PC-9 (cell line): ENCODE measurements at regions of chr20 and their contacts with region 1.

Region 1: DNA sequence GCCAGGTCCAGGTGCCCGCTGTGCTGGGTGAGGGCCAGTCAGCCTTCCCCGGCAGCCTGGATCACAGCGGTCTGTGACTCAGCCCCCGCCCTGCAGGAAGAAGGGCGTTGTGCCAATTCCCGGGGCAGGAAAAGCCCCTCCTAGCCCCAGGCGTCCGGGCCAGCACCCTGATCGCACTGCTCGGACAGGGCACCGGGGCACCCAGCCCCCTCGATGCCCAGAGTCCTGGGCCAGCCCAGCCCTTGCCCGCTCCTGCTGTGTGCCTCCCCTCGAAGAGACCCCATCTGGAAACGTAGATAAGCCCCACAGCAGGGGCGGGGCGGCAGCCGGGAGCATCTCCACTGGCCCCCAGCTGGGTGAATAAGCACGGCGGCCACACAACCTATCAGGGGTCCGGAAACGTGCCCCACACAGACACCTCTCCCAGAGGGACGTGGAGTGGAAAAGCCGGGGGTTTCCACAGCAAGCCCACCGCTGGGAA is 9.9 kb downstream of the LAMA5 start:
- DNase-seq: peak; percentile 74 to 96
- H3K4me3 ChIP-seq: peak overlapping the region; percentile 55
- H3K27ac ChIP-seq: peak overlapping the region; percentile 86
- H3K4me1 ChIP-seq: peaks cover 92% of the 10 kb centered on the region
- H3K27me3 ChIP-seq: no peaks in the 10 kb centered on the region
- CTCF ChIP-seq: no peak

Region 2: DNA sequence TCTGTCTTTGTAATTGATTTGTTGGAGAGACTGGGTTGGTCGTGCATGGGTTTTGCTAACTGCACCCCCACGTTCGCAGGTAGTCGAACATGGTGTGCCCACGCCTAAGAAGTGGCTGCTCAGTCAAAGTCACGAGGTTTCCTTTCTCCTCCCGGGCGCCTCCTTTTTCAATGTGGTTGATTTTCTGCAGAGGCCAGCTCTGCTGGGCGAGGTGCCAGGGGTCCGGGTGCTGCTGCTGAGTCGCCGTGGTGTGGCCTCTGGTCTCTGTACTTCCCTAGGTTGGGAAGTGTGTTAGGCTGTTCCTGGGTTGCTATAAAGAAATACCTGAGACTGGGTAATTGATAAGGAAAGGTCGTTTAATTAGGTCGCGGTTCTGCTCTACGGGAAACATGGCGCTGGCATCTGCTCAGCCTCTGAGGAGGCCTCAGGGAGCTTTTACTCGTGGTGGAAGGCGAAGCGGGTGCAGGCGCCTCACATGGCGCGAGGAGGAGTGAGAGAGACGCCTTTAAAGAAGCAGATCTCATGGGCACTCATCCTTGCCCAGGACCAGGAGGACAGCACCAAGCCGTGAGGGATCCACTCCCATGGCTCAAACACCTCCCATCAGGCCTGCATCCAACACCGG is 104.8 kb before region 1 on chr20:
- CTCF ChIA-PET with region 1: no interaction called
- POLR2A ChIA-PET with region 1: no interaction called
- intact Hi-C with region 1: no loop called
- DNase-seq: peak in 1 of 2 experiments; percentile 41
- H3K4me3 ChIP-seq: no peak overlapping the region
- H3K27ac ChIP-seq: no peak overlapping the region
- H3K4me1 ChIP-seq: no peaks in the 10 kb centered on the region
- H3K27me3 ChIP-seq: no peaks in the 10 kb centered on the region
- CTCF ChIP-seq: no peak

Region 3: GRCh38 chr20:62368976-62369814 is 12.0 kb after region 1 on chr20:
- CTCF ChIA-PET with region 1: interaction called, 6 read pairs
- POLR2A ChIA-PET with region 1: interaction called, 10 read pairs
- intact Hi-C with region 1: loop called (anchors 1 kb)
- DNase-seq: peak; percentile 53 to 79
- H3K4me3 ChIP-seq: peak overlapping the region; percentile 58; the same call in 1 of the 2 replicates
- H3K27ac ChIP-seq: peak overlapping the region; percentile 35; the same call in 1 of the 2 replicates
- H3K4me1 ChIP-seq: peaks cover 44% of the 10 kb centered on the region
- H3K27me3 ChIP-seq: no peaks in the 10 kb centered on the region
- CTCF ChIP-seq: peak; percentile 23; the same call in 1 of the 2 replicates